CD8-positive, alpha-beta memory T cell (primary cell): ENCODE measurements at regions of chr1 and their contacts with region 1.

Region 1: GRCh38 chr1:35726450-35727433 is 8.1 kb upstream of the C1orf216 start:
- DNase-seq: peak; percentile 21 to 71 (median 40)
- H3K4me3 ChIP-seq: no peak overlapping the region
- H3K4me3 Mint-ChIP-seq: peak overlapping the region in 1 of 7 donors; percentile 24
- H3K27ac ChIP-seq: no peak overlapping the region
- H3K27ac Mint-ChIP-seq: peak overlapping the region in 4 of 8 donors; percentile 4 to 47 (median 30)
- H3K4me1 ChIP-seq: no peaks in the 10 kb centered on the region
- H3K4me1 Mint-ChIP-seq: peaks cover 0 to 6% (median 5%) of the 10 kb centered on the region in 3 donors
- H3K27me3 ChIP-seq: no peaks in the 10 kb centered on the region
- H3K27me3 Mint-ChIP-seq: no peaks in the 10 kb centered on the region

Region 2: DNA sequence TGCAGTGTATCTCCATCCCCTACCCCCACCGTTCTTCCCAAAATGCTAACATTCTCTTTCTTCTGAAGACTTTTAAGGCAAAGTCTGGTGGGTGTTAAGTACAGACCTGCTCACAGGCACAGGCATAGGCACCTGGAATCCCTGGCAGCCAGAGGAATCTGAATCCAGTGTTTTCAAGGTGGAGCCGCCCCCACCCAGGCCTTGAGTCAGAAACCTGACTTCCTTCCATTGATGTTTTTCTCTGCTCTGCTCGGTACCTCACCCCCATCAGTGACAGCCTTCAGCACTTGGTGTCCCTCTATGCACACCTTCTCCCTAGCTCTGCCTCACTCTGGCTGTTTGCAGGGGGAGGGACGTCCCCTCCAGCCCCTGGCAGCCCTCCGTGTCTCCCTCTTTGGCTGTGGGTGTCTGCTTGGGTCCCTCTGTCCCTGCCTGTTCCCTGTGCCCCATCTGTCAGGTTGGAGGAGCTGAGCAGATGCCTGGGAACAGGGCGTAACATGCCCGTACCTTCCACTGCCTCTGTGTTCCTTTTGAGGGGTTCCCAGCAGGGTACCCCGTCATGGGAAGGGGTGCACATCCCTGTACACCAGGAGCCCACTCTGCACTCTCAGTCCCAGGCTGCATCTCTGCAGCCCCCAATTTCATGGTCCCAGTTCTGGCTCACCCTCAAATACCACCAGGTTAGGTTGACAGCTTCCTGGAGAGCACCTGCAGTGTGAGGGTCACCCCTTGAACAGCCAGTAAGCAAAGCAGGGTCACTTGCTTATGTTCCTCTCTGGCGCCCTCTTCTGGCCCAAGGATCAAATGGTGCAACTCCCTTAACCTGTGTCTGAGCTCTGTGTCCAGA is 162.5 kb before region 1 on chr1:
- CTCF ChIA-PET with region 1: interaction called, 35 read pairs
- POLR2A ChIA-PET with region 1: no interaction called
- DNase-seq: peak; percentile 58 to 84 (median 70)
- H3K4me3 ChIP-seq: no peak overlapping the region
- H3K4me3 Mint-ChIP-seq: peak overlapping the region in 1 of 7 donors; percentile 29
- H3K27ac ChIP-seq: no peak overlapping the region
- H3K27ac Mint-ChIP-seq: peak overlapping the region in 7 of 8 donors; percentile 16 to 82 (median 58)
- H3K4me1 ChIP-seq: peaks cover 2% of the 10 kb centered on the region
- H3K4me1 Mint-ChIP-seq: peaks cover 17 to 43% (median 34%) of the 10 kb centered on the region in 3 donors
- H3K27me3 ChIP-seq: no peaks in the 10 kb centered on the region
- H3K27me3 Mint-ChIP-seq: no peaks in the 10 kb centered on the region

Region 3: GRCh38 chr1:35577071-35577998 is 149.4 kb before region 1 on chr1:
- CTCF ChIA-PET with region 1: interaction called, 25 read pairs
- POLR2A ChIA-PET with region 1: no interaction called
- DNase-seq: peak; percentile 47 to 84 (median 66)
- H3K4me3 ChIP-seq: peak overlapping the region; percentile 81
- H3K4me3 Mint-ChIP-seq: peak overlapping the region; percentile 69 to 96 (median 93)
- H3K27ac ChIP-seq: peak overlapping the region; percentile 1
- H3K27ac Mint-ChIP-seq: peak overlapping the region; percentile 15 to 97 (median 94)
- H3K4me1 ChIP-seq: peaks cover 20% of the 10 kb centered on the region
- H3K4me1 Mint-ChIP-seq: peaks cover 25 to 37% (median 28%) of the 10 kb centered on the region in 3 donors
- H3K27me3 ChIP-seq: no peaks in the 10 kb centered on the region
- H3K27me3 Mint-ChIP-seq: peaks cover 0 to 2% of the 10 kb centered on the region in 2 donors

Region 4: DNA sequence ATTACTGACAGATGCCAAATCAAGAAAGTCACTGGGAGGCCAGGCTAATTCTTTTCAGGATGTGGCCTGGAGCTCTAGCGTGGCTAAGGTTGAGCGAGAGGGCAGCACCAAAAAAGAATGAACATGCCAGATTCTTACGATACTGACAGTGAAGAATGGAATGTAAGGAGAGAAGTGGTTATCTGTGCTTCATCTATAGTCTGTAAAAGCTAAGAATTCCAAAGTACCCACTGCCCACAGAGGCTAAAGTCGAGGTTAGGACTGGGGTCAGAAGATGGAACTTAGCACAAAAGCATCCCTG is 120.9 kb before region 1 on chr1:
- CTCF ChIA-PET with region 1: no interaction called
- POLR2A ChIA-PET with region 1: no interaction called
- DNase-seq: no peak
- H3K4me3 ChIP-seq: no peak overlapping the region
- H3K4me3 Mint-ChIP-seq: no peak overlapping the region
- H3K27ac ChIP-seq: no peak overlapping the region
- H3K27ac Mint-ChIP-seq: peak overlapping the region in 3 of 8 donors; percentile 48 to 85 (median 51)
- H3K4me1 ChIP-seq: no peaks in the 10 kb centered on the region
- H3K4me1 Mint-ChIP-seq: peaks cover 12 to 22% (median 15%) of the 10 kb centered on the region in 3 donors
- H3K27me3 ChIP-seq: no peaks in the 10 kb centered on the region
- H3K27me3 Mint-ChIP-seq: no peaks in the 10 kb centered on the region

Region 5: DNA sequence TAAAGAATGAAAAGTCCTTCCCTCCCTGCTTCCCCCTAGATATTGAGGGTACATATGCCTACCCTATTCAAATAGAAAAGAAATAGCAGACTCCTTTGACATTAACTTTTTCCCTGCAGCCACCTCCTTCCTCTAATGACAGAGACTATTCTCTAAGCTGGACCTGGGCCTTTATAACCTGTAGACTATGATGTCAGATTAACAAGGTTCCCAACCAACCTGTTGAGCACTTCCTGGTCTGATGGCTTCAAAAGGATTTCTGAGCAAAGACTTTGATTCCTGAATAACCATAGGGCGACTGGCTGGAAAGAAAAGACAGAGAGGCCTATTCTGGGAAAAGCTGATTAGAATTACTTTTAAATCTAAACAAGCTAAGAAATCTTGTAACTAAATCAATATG is 10.4 kb after region 1 on chr1:
- CTCF ChIA-PET with region 1: interaction called, 17 read pairs
- POLR2A ChIA-PET with region 1: no interaction called
- DNase-seq: no peak
- H3K4me3 ChIP-seq: no peak overlapping the region
- H3K4me3 Mint-ChIP-seq: no peak overlapping the region
- H3K27ac ChIP-seq: no peak overlapping the region
- H3K27ac Mint-ChIP-seq: peak overlapping the region in 1 of 8 donors; percentile 30
- H3K4me1 ChIP-seq: no peaks in the 10 kb centered on the region
- H3K4me1 Mint-ChIP-seq: no peaks in the 10 kb centered on the region
- H3K27me3 ChIP-seq: no peaks in the 10 kb centered on the region
- H3K27me3 Mint-ChIP-seq: no peaks in the 10 kb centered on the region

Region 6: GRCh38 chr1:35747938-35748702 is 21.4 kb after region 1 on chr1:
- CTCF ChIA-PET with region 1: interaction called, 16 read pairs
- POLR2A ChIA-PET with region 1: no interaction called
- DNase-seq: no peak
- H3K4me3 ChIP-seq: no peak overlapping the region
- H3K4me3 Mint-ChIP-seq: no peak overlapping the region
- H3K27ac ChIP-seq: no peak overlapping the region
- H3K27ac Mint-ChIP-seq: peak overlapping the region in 1 of 8 donors; percentile 5
- H3K4me1 ChIP-seq: no peaks in the 10 kb centered on the region
- H3K4me1 Mint-ChIP-seq: no peaks in the 10 kb centered on the region
- H3K27me3 ChIP-seq: no peaks in the 10 kb centered on the region
- H3K27me3 Mint-ChIP-seq: no peaks in the 10 kb centered on the region

Region 7: GRCh38 chr1:35769188-35769758 is 42.5 kb after region 1 on chr1:
- CTCF ChIA-PET with region 1: interaction called, 18 read pairs
- POLR2A ChIA-PET with region 1: no interaction called
- DNase-seq: peak; percentile 76 to 88 (median 80)
- H3K4me3 ChIP-seq: peak overlapping the region; percentile 87
- H3K4me3 Mint-ChIP-seq: peak overlapping the region; percentile 84 to 97 (median 94)
- H3K27ac ChIP-seq: peak overlapping the region; percentile 81
- H3K27ac Mint-ChIP-seq: peak overlapping the region; percentile 47 to 98 (median 80)
- H3K4me1 ChIP-seq: peaks cover 6% of the 10 kb centered on the region
- H3K4me1 Mint-ChIP-seq: peaks cover 7 to 17% (median 13%) of the 10 kb centered on the region in 3 donors
- H3K27me3 ChIP-seq: no peaks in the 10 kb centered on the region
- H3K27me3 Mint-ChIP-seq: no peaks in the 10 kb centered on the region